GM12878 (cell line): ENCODE measurements at regions of chr14 and their contacts with region 1.

Region 1: DNA sequence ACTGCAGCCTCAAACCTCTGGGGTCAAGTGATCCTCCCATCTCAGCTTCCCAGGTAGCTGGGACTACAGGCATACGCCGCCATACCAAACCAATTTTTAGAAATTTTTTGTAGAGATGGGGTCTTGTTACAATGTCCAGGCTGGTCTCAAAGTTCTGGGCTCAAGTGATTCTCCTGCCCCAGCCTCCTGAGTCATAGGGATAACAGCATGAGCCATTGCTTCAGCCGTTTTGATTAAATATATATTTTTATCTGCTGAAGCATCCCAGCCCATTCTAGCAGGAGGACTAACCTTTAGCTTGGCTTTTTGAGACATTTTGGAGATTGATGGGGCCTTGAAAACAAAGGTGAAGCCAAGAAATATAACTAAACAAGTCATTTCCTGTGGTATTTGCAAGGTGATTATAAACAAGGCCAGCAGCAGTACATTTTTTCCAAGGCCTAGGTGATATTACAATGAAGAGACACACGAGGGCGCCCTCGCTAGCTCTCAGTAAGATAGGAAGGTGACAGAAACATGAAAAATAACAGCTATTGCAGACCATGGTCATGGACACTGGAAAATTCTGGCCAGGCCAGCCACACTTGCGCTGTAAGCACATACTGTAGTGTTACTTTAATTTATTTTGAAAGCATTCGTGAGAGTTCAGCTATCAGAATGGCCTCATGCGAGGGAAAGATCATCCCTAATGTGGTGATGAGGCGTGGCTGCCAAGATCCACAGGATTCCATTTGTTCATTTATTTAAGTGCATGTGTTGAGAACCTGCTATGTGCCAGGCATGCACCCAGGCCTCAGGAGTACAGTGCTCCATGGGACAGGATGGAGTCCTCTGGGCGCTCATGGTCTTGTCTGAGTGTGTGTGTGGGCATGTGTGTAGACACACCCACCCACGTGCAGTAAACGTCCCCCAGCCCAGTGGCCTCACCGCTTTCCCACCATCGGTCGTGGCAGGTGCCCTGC is 63.5 kb downstream of the DGLUCY start:
- DNase-seq: peak; percentile 35
- ATAC-seq: peak; percentile 87
- H3K4me3 ChIP-seq: no peak overlapping the region
- H3K27ac ChIP-seq: no peak overlapping the region; the same call in 1 of the 2 replicates
- H3K4me1 ChIP-seq: no peaks in the 10 kb centered on the region
- H3K27me3 ChIP-seq: no peaks in the 10 kb centered on the region
- CTCF ChIP-seq: peak; percentile 77 to 88 (median 84)
- EP300 ChIP-seq: no peak
- POLR2A ChIP-seq: no peak
- RAD21 ChIP-seq: peak; percentile 90

Region 2: DNA sequence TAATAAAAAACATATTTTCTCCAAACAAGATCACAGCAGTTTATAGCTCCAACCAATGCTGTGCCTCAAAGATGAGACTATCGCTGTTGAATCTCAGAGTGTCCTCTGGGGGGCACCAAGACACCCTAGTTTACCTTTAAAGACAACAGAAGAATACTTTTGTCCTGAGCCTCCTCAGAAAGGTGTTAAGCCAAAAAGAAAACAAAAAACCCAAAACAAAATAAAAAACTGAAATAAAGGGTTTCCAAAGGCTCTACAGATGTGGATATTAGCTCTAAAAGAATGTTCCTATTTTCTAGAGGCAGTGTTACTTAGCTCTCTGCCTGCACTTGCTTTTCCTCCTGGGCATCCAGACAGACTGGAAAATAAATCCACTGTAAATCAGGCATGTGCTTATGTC is 274.3 kb before region 1 on chr14:
- CTCF ChIA-PET with region 1: interaction called, 333 read pairs
- POLR2A ChIA-PET with region 1: interaction called, 7 read pairs
- RAD21 ChIA-PET with region 1: interaction called, 119 read pairs
- SMC1A ChIA-PET with region 1: interaction called, 183 read pairs
- in situ Hi-C with region 1: loop called (anchors 5 kb)
- intact Hi-C with region 1: loop called (anchors 1 kb)
- DNase-seq: peak; percentile 17
- ATAC-seq: peak; percentile 85
- H3K4me3 ChIP-seq: no peak overlapping the region
- H3K27ac ChIP-seq: no peak overlapping the region
- H3K4me1 ChIP-seq: peaks cover 8% of the 10 kb centered on the region; the same call in 1 of the 2 replicates
- H3K27me3 ChIP-seq: no peaks in the 10 kb centered on the region
- CTCF ChIP-seq: peak; percentile 64 to 78 (median 73)
- EP300 ChIP-seq: no peak
- POLR2A ChIP-seq: no peak
- RAD21 ChIP-seq: peak; percentile 91

Region 3: GRCh38 chr14:91060351-91061055 is 116.9 kb before region 1 on chr14 and contains the start of gene RPS6KA5:
- CTCF ChIA-PET with region 1: interaction called, 20 read pairs
- POLR2A ChIA-PET with region 1: no interaction called
- RAD21 ChIA-PET with region 1: interaction called, 19 read pairs
- SMC1A ChIA-PET with region 1: interaction called, 9 read pairs
- in situ Hi-C with region 1: no loop called
- intact Hi-C with region 1: loop called (anchors 5 kb)
- DNase-seq: peak; percentile 100
- ATAC-seq: peak; percentile 90
- H3K4me3 ChIP-seq: peak within 1 kb of the TSS; percentile 87
- H3K27ac ChIP-seq: peak within 1 kb of the TSS; percentile 72
- H3K4me1 ChIP-seq: peaks cover 11% of the 10 kb centered on the region
- H3K27me3 ChIP-seq: no peaks in the 10 kb centered on the region
- CTCF ChIP-seq: no peak; a peak in 2 of 6 replicates
- EP300 ChIP-seq: peak in 1 of 2 experiments; percentile 53; a peak in 2 of 4 replicates
- POLR2A ChIP-seq: peak; percentile 75
- RAD21 ChIP-seq: no peak
- polyA plus RNA-seq, gene RPS6KA5: 1.4 to 1.5 TPM

Region 4: DNA sequence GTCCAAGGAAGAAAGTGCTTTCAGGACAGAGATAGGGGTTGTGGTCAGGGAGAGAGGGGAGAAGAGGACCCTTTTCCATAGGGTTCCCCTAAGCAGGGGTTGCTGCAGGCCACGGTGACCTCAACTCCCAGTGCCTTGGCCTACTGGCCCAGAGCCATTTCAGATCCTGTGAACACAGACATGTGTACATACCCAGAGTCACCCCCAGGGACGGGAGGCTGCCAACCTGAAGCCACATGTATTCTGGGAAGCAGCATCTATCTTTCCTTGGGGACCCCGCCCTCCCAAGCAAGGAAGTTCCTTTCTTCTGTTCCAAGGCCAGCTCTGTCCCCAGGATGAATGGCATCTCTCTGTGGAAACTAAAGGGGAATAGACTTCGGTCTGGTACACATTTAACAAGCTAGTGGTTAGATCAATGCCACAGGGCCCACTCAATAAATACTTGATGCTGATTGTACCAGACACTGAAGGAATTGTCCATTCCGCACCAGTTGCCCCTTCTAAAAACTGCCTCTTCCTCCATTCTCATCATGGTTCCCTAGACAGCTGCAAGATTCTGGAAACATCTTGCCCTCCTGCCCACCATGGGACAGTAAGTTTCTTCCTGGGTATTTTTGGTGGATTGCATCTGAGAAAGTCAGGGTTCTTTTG is 88.6 kb before region 1 on chr14:
- CTCF ChIA-PET with region 1: no interaction called
- POLR2A ChIA-PET with region 1: no interaction called
- RAD21 ChIA-PET with region 1: no interaction called
- SMC1A ChIA-PET with region 1: no interaction called
- in situ Hi-C with region 1: no loop called
- intact Hi-C with region 1: no loop called
- DNase-seq: no peak
- ATAC-seq: no peak
- H3K4me3 ChIP-seq: no peak overlapping the region
- H3K27ac ChIP-seq: no peak overlapping the region
- H3K4me1 ChIP-seq: peaks cover 3% of the 10 kb centered on the region; the same call in 1 of the 2 replicates
- H3K27me3 ChIP-seq: no peaks in the 10 kb centered on the region; a peak in 1 of 4 replicates
- CTCF ChIP-seq: no peak
- EP300 ChIP-seq: no peak
- POLR2A ChIP-seq: no peak
- RAD21 ChIP-seq: no peak

Region 5: DNA sequence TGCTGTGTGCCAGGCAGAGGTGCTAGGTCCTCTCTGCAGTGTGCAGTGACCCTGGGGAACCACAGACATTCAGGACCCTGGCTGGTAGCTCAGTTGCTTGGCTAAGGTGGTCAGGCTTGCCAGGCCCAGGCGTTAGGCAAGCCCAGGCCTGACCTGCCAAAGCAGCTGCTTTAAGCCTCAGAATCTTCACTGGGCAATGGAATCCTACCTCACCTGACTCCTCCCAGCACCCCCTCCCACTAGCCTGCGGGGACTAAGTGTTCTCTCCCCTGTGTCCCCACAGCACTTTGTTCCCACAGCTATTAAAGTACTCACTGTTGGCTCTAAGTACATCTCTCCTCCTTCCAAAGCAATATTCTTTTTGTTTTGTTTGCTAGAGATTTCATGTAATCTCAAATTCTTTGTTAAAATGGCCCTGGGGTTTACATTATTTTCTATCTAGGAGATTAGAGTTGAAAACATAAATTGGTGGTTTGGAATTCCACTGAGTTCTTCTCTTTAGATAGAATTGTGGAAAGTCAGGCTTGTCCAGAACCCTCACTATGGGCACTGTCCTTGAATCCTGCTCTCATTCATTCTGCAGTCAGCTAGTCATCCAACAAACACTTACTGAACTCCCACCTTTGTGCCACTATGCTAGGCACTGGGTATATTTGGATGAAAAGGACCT is 19.1 kb before region 1 on chr14:
- CTCF ChIA-PET with region 1: interaction called, 24 read pairs
- POLR2A ChIA-PET with region 1: no interaction called
- RAD21 ChIA-PET with region 1: interaction called, 3 read pairs
- SMC1A ChIA-PET with region 1: interaction called, 4 read pairs
- in situ Hi-C with region 1: no loop called
- intact Hi-C with region 1: no loop called
- DNase-seq: no peak
- ATAC-seq: no peak
- H3K4me3 ChIP-seq: no peak overlapping the region
- H3K27ac ChIP-seq: no peak overlapping the region
- H3K4me1 ChIP-seq: no peaks in the 10 kb centered on the region
- H3K27me3 ChIP-seq: no peaks in the 10 kb centered on the region
- CTCF ChIP-seq: no peak
- EP300 ChIP-seq: no peak
- POLR2A ChIP-seq: no peak
- RAD21 ChIP-seq: no peak

Region 6: DNA sequence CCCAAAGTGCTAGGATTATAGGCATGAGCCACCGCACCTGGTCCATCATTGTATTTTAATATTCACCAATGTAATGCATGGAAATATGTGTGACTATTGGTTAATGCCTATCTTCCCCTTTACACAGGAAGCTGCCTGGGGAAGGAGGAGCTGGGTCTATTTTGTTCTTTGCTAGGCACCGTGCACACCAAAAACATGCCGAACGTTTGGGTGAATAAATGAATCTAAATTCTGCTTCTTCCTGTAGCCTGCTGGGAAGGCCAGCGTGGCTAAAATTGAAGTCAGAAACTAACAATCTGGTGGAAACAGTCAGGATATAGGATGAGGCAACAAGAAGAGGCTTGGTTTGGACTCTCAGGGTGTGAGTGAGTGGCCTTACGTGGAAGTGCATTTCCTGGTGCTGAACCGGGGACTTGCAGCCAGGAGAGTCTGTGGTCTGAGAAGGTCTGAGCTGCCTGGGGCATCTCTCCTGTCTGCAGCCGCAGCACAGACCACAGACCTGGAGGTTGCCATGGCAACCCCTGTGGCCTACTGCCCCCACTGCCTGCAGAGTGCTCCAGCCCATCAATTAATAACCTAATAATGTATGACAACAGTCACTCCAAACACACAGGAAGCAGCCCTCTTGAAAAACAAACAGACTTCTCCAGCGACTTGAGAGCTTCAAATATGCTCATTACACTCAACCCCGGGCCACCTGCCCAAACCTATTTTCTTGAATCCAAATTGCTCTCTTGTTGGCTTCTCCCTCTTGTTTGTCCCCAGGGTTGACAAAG is 72.7 kb after region 1 on chr14:
- CTCF ChIA-PET with region 1: interaction called, 10 read pairs
- POLR2A ChIA-PET with region 1: no interaction called
- RAD21 ChIA-PET with region 1: interaction called, 4 read pairs
- SMC1A ChIA-PET with region 1: interaction called, 7 read pairs
- in situ Hi-C with region 1: no loop called
- intact Hi-C with region 1: no loop called
- DNase-seq: peak; percentile 90
- ATAC-seq: peak; percentile 89
- H3K4me3 ChIP-seq: peak overlapping the region; percentile 13; the same call in 1 of the 2 replicates
- H3K27ac ChIP-seq: peak overlapping the region; percentile 67
- H3K4me1 ChIP-seq: peaks cover 39% of the 10 kb centered on the region
- H3K27me3 ChIP-seq: no peaks in the 10 kb centered on the region
- CTCF ChIP-seq: 0 out of 6 replicates have a peak, but pooled peaks of 1 of the 3 experiments have one; percentile 1
- EP300 ChIP-seq: peak; percentile 66 to 69; a peak in 2 of 4 replicates
- POLR2A ChIP-seq: no peak
- RAD21 ChIP-seq: no peak

Region 7: GRCh38 chr14:91286530-91286937 is 109.2 kb after region 1 on chr14:
- CTCF ChIA-PET with region 1: interaction called, 211 read pairs
- POLR2A ChIA-PET with region 1: interaction called, 5 read pairs
- RAD21 ChIA-PET with region 1: interaction called, 44 read pairs
- SMC1A ChIA-PET with region 1: interaction called, 109 read pairs
- in situ Hi-C with region 1: loop called (anchors 5 kb)
- intact Hi-C with region 1: loop called (anchors 1 kb)
- DNase-seq: peak; percentile 21
- ATAC-seq: peak; percentile 92
- H3K4me3 ChIP-seq: no peak overlapping the region
- H3K27ac ChIP-seq: no peak overlapping the region
- H3K4me1 ChIP-seq: no peaks in the 10 kb centered on the region
- H3K27me3 ChIP-seq: no peaks in the 10 kb centered on the region
- CTCF ChIP-seq: peak; percentile 69 to 86 (median 85); a peak in 5 of 6 replicates
- EP300 ChIP-seq: no peak
- POLR2A ChIP-seq: no peak
- RAD21 ChIP-seq: peak; percentile 84